ENCODE measurements at regions of chr11 and their contacts with region 1.

Region 1: GRCh38 chr11:74453373-74453975 is 13.9 kb downstream of the KCNE3 start:
- DNase-seq: peak; percentile 63
- CTCF ChIP-seq: peak; percentile 81

Region 2: DNA sequence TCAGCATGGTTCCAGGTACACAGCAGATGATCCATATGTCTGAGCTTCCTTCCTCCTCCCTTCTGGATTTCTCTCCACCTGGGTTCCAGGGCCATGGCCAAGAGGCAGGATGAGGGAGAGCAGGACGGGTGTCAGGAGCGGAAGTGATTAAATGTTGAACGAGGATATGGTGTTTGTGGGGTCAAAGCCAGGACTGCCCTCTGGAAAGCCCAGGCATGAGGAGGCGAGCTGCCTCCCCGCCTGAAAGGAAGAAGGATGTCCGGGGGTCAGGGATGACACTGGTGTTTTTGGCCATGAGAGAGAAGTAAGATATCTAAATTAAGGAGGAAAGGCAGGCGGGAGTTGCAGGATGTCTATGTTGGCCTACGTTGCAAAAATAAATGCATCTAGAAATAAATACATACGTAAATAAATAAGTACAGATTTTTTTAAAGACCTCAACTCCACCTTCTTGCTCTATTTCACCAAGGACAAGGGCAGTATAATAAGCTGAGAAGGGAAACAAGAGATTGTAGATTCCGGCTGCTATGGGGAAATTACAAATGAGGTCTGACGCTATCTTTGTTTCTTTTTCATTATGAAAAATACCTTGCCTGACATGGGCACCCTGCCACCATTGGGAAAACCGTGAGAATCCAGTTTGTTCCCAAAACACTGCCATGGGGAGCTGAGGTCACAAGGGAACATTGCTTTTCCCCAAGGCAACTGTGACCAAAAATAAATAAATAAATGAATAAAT is 67.6 kb after region 1 on chr11:
- in situ Hi-C with region 1: no loop called
- DNase-seq: no peak
- CTCF ChIP-seq: no peak

Region 3: DNA sequence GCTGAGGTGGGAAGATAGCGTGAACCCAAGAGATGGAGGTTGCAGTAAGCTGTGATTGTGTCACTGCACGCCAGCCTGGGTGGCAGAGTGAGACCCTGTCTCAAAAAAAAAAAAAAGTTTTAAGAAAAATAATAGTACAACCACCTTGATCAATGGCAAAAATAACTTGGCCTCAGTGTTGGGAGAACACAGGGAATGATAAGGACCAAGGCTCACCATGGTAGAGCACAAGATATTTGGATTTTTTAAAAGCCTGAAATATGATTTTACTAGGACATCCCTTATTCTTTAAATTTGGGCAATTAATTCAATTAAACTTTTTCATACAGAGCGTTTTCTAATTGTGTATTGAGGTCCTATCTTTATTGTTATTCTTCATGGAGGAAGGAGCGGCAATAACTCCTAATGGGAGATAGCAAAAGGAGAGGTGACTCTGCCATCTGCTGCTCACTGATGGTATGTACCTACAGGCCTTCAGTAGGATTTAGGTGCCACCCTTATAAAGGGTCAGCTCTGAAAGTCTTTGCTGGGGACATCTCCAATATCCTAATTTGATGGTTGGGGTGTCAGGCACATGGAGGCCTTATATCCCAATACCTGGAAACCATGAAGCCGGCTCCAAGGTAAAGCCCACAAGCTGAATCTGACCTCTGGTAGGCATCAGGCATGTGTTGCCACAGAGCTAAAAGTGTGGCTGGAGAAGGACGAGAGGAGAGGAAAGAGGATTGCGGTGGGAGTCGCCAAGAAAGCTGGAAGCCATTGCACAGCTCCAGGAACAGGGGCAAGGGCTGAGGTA is 117.0 kb after region 1 on chr11:
- in situ Hi-C with region 1: loop called (anchors 25 kb)
- DNase-seq: peak; percentile 55
- CTCF ChIP-seq: peak; percentile 70

Region 4: GRCh38 chr11:74592441-74593362 is 139.2 kb after region 1 on chr11 and contains the start of gene POLD3:
- in situ Hi-C with region 1: no loop called
- DNase-seq: peak; percentile 85
- CTCF ChIP-seq: no peak

Measured in GM13977 (cell line).